ENCODE measurements at regions of chr18 and their contacts with region 1.

Region 1: GRCh38 chr18:77101410-77102258 is 30.9 kb downstream of the MBP start:
- DNase-seq: no peak
- H3K4me3 Mint-ChIP-seq: peak overlapping the region; percentile 74
- H3K27ac Mint-ChIP-seq: peak overlapping the region; percentile 98
- H3K4me1 Mint-ChIP-seq: peaks cover 88% of the 10 kb centered on the region
- H3K27me3 Mint-ChIP-seq: no peaks in the 10 kb centered on the region

Region 2: GRCh38 chr18:76658627-76659026 is 443.0 kb before region 1 on chr18:
- intact Hi-C with region 1: loop called (anchors 10 kb)
- DNase-seq: no peak
- H3K4me3 Mint-ChIP-seq: no peak overlapping the region
- H3K27ac Mint-ChIP-seq: no peak overlapping the region
- H3K4me1 Mint-ChIP-seq: peaks cover 21% of the 10 kb centered on the region
- H3K27me3 Mint-ChIP-seq: peaks cover 53% of the 10 kb centered on the region

Region 3: DNA sequence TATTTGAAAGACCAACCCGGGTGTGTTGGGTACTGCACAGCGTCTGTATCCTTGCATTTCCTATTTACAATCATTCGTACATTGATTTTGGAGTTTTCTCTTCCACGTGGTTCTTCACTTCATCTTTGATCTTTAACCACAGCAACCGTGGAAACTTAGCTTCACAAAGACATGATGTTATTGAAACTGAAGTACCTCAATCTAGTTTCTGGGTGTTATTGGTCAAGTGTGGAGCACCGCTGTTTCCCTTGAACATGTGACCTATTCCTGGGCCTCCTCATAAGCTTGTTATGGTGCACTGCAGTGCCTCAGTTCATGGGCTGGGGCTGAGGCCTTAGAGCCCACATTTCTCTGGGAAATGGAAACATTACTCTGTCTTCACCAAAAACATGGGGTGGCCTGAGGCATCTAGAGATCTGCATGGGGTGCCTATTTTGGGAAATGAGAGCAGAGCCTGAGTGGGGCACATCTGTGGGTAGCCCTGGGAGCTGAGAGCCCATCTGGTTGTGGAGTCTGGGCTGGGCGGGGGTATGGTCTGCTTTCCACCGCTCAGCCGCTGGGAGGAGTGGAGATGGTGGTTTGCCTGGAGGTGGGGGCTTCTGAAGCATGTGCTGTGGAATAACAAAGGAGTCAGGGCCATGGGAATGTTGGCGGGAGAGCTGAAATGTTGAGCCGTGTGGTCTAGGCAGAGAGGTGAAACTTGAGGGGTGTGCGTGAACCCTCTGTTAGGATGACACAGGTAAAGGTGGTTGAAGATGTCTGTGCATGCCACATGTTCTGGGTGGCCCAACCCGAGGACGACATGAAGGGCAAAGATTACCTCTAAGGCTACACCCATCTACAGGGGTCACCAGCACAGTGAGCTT is 241.9 kb before region 1 on chr18:
- intact Hi-C with region 1: loop called (anchors 10 kb)
- DNase-seq: peak; percentile 30
- H3K4me3 Mint-ChIP-seq: peak overlapping the region; percentile 51
- H3K27ac Mint-ChIP-seq: peak overlapping the region; percentile 93
- H3K4me1 Mint-ChIP-seq: peaks cover 44% of the 10 kb centered on the region
- H3K27me3 Mint-ChIP-seq: no peaks in the 10 kb centered on the region

Region 4: DNA sequence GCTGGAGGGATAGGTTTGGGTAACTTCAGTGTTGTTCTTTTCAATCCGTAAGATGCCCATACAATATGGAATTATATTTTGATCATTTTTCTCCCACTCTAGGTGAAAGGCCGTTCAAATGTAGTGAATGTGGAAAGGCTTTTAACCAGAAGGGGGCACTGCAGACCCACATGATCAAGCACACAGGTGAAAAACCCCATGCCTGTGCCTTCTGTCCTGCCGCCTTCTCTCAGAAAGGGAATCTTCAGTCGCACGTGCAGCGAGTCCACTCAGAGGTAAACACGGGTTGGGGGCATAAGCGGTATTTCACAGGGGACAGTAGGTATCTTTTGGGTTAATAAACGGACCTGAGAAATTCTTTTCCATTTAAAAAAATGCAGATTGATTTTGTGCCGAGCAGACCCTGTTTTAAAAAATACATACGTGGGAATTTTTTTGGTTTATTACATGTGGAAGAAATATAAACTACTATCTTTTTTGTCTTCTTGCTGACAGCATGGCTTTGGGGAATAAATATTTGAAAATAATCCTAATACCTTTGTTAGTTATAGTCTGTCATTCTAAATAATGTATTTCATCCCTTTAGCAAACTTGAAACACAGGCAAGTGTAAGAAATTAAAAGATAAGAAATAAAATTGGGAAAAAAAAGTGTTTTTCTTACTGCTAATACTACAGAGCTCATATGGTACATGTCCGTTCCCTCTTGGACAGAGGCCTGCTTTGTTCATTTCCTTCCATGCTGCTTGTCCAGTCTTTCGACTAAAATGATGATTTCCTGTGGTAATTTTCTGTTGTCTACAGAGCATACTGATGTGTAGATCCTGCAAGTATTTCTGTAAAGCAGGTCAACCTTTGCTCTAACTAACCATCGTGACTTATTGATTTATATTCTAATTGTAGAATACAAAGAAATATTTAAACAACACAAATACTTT is 226.0 kb before region 1 on chr18:
- intact Hi-C with region 1: no loop called
- DNase-seq: peak; percentile 22
- H3K4me3 Mint-ChIP-seq: no peak overlapping the region
- H3K27ac Mint-ChIP-seq: peak overlapping the region; percentile 85
- H3K4me1 Mint-ChIP-seq: peaks cover 14% of the 10 kb centered on the region
- H3K27me3 Mint-ChIP-seq: no peaks in the 10 kb centered on the region

Region 5: GRCh38 chr18:77067291-77068061 is 34.2 kb before region 1 on chr18:
- intact Hi-C with region 1: loop called (anchors 1 kb)
- DNase-seq: peak; percentile 68
- H3K4me3 Mint-ChIP-seq: peak overlapping the region; percentile 63
- H3K27ac Mint-ChIP-seq: peak overlapping the region; percentile 94
- H3K4me1 Mint-ChIP-seq: peaks cover 97% of the 10 kb centered on the region
- H3K27me3 Mint-ChIP-seq: no peaks in the 10 kb centered on the region

Region 6: DNA sequence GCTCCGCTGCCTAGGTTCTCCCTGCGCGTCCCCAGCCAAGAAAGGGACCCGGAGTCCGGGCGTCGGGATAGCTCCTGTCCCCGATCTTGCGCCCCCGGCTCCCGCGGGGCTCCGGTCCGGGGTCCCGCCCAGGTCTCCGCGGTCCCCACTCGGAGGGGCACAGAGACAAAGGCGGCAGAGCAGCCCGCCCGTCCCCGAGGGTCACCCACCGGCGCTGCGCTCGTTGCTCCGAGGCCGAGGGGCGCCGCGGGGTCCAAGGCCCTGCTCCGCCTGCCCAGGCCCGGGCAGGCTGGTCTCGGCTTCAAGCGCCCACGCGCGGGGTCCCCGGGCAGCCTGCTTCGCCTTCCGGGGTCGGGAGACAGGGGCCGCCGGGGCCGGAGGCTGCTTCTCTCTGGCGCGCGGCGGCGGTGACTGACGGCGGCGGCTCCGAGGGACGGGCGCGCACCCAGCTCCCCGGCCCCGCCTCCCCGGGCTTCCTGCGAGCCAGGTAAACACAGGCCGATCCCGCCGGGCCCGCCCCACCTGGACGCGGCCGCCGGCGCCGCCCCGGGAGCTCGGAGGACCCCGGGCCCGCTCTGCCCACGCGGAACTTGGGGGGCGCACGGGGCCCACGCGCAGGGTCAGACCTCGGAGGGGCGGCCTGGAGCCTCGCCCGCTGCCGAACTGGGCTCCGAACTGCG is 30.9 kb after region 1 on chr18 and contains the start of gene MBP:
- intact Hi-C with region 1: loop called (anchors 1 kb)
- DNase-seq: peak; percentile 55
- H3K4me3 Mint-ChIP-seq: peak within 1 kb of the TSS; percentile 98
- H3K27ac Mint-ChIP-seq: peak within 1 kb of the TSS; percentile 95
- H3K4me1 Mint-ChIP-seq: peaks cover 56% of the 10 kb centered on the region
- H3K27me3 Mint-ChIP-seq: no peaks in the 10 kb centered on the region
- total RNA-seq, gene MBP: 53.7 and 54.3 TPM in 2 replicates

Region 7: DNA sequence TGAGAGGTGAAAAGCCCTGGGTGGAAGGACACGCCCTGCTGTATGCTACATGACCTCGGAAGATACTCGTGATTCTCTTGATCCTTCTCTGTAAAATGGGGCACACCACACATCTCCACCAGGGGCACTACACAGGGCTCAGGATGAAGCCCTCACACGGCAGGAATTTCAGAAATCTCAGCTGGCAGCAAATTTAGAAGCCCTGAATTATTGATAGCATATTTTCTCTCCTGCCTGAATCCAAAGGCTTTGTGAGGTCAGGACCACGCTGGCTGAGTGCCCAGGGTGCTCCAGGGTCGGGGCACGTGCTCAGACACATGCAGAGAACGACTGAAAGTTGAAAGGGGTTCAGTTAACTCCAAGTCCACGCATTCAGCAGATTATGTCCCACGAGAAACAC is 105.9 kb after region 1 on chr18:
- intact Hi-C with region 1: loop called (anchors 1 kb)
- DNase-seq: no peak
- H3K4me3 Mint-ChIP-seq: peak overlapping the region; percentile 39
- H3K27ac Mint-ChIP-seq: peak overlapping the region; percentile 42
- H3K4me1 Mint-ChIP-seq: peaks cover 39% of the 10 kb centered on the region
- H3K27me3 Mint-ChIP-seq: no peaks in the 10 kb centered on the region

Region 8: GRCh38 chr18:77911971-77912605 is 810.5 kb after region 1 on chr18:
- intact Hi-C with region 1: no loop called
- DNase-seq: no peak
- H3K4me3 Mint-ChIP-seq: no peak overlapping the region
- H3K27ac Mint-ChIP-seq: no peak overlapping the region
- H3K4me1 Mint-ChIP-seq: no peaks in the 10 kb centered on the region
- H3K27me3 Mint-ChIP-seq: no peaks in the 10 kb centered on the region